ENCODE measurements at regions of chr9 and their contacts with region 1.

Region 1: GRCh38 chr9:76393963-76394679 is at the start of gene RFK:
- DNase-seq: peak; percentile 98
- H3K4me3 Mint-ChIP-seq: peak within 1 kb of the TSS; percentile 97
- H3K27ac Mint-ChIP-seq: peak within 1 kb of the TSS; percentile 99
- H3K4me1 Mint-ChIP-seq: peaks cover 25% of the 10 kb centered on the region
- H3K27me3 Mint-ChIP-seq: no peaks in the 10 kb centered on the region
- total RNA-seq, gene RFK: 16.6 and 17.9 TPM in 2 replicates

Region 2: DNA sequence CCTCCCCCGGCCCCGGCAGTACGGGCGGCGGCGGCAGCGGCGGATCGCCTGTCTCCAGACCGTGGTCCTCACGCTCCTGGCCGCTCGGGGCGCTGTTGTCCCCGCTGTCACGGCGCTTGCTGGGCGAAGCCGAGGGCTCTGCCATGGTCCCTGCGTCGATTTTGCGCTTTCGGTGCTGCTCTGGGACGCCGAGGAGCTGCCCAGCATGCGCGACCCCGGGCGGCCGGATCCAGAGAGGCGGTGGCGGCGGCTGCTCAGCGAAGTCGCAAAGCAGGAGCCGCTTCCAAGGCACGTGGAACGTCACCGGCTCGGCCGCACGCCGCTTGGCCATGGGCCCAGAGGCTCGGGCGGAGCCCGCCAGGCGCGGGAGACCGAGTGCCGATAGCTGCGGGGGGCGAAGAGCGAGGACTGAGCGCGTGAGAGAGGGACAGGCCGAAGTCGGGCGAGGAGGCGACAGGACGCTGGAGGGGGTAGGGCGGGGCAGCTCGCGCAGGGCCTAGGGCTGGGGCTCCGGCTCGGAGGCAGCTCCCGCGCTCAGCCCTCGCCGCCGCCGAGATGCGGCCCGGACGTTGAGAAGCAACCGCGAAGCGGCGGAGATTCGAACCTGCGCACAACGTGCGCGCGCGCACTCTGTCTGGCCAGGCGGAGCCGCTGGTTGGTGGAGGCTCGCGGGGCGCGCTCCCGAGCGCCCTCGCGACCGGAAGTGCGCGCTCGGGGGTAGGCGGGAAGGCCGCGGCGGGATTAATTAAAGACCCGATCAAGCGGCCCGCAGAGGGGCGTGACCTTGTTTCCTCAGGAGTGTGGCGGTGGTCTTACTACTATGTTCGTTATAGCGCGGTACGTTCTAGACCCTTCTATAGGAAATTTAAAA is 1441.6 kb before region 1 on chr9 and contains the start of gene C9orf40:
- intact Hi-C with region 1: loop called (anchors 10 kb)
- DNase-seq: peak; percentile 97
- H3K4me3 Mint-ChIP-seq: peak within 1 kb of the TSS; percentile 98
- H3K27ac Mint-ChIP-seq: peak within 1 kb of the TSS; percentile 97
- H3K4me1 Mint-ChIP-seq: peaks cover 39% of the 10 kb centered on the region
- H3K27me3 Mint-ChIP-seq: no peaks in the 10 kb centered on the region
- total RNA-seq, gene C9orf40: 19.6 and 20.0 TPM in 2 replicates

Region 3: DNA sequence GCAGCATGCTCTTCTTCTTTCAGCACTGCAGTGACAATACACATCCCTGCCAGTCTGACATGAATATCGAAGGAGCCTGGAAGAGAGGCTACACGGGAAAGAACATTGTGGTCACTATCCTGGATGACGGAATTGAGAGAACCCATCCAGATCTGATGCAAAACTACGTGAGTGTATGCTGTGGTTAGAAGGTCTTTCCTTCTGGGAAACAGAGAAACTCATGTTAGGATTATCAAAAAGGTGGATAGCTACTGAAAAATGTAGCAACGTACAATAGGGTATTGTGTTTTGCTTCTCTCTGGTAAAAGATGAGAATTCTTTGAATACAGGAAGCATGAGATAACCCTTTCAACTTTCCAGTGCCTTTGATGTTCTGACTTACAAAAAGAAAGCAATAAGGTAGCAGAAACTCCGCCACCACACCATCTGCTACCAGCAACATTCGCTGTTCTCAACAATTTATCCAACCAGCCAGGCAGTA is 370.4 kb before region 1 on chr9:
- intact Hi-C with region 1: loop called (anchors 5 kb)
- DNase-seq: peak; percentile 87
- H3K4me3 Mint-ChIP-seq: peak overlapping the region; percentile 72
- H3K27ac Mint-ChIP-seq: peak overlapping the region; percentile 74
- H3K4me1 Mint-ChIP-seq: peaks cover 68% of the 10 kb centered on the region
- H3K27me3 Mint-ChIP-seq: no peaks in the 10 kb centered on the region

Region 4: GRCh38 chr9:76292246-76292645 is 101.9 kb before region 1 on chr9:
- intact Hi-C with region 1: no loop called
- DNase-seq: no peak
- H3K4me3 Mint-ChIP-seq: no peak overlapping the region
- H3K27ac Mint-ChIP-seq: no peak overlapping the region
- H3K4me1 Mint-ChIP-seq: peaks cover 6% of the 10 kb centered on the region
- H3K27me3 Mint-ChIP-seq: no peaks in the 10 kb centered on the region

Region 5: GRCh38 chr9:76576344-76576743 is 182.2 kb after region 1 on chr9:
- intact Hi-C with region 1: loop called (anchors 5 kb)
- DNase-seq: peak; percentile 89
- H3K4me3 Mint-ChIP-seq: peak overlapping the region; percentile 65
- H3K27ac Mint-ChIP-seq: peak overlapping the region; percentile 88
- H3K4me1 Mint-ChIP-seq: peaks cover 26% of the 10 kb centered on the region
- H3K27me3 Mint-ChIP-seq: peaks cover 3% of the 10 kb centered on the region

Region 6: GRCh38 chr9:77177161-77177893 is 783.2 kb after region 1 on chr9 and contains the start of gene VPS13A:
- intact Hi-C with region 1: loop called (anchors 1 kb)
- DNase-seq: peak; percentile 97
- H3K4me3 Mint-ChIP-seq: peak within 1 kb of the TSS; percentile 99
- H3K27ac Mint-ChIP-seq: peak within 1 kb of the TSS; percentile 92
- H3K4me1 Mint-ChIP-seq: peaks cover 22% of the 10 kb centered on the region
- H3K27me3 Mint-ChIP-seq: peaks cover 15% of the 10 kb centered on the region
- total RNA-seq, gene VPS13A: 44.9 and 47.7 TPM in 2 replicates